Esophagus muscularis mucosa (tissue), 4 donors: ENCODE measurements at regions of chr3 and their contacts with region 1.

Region 1: DNA sequence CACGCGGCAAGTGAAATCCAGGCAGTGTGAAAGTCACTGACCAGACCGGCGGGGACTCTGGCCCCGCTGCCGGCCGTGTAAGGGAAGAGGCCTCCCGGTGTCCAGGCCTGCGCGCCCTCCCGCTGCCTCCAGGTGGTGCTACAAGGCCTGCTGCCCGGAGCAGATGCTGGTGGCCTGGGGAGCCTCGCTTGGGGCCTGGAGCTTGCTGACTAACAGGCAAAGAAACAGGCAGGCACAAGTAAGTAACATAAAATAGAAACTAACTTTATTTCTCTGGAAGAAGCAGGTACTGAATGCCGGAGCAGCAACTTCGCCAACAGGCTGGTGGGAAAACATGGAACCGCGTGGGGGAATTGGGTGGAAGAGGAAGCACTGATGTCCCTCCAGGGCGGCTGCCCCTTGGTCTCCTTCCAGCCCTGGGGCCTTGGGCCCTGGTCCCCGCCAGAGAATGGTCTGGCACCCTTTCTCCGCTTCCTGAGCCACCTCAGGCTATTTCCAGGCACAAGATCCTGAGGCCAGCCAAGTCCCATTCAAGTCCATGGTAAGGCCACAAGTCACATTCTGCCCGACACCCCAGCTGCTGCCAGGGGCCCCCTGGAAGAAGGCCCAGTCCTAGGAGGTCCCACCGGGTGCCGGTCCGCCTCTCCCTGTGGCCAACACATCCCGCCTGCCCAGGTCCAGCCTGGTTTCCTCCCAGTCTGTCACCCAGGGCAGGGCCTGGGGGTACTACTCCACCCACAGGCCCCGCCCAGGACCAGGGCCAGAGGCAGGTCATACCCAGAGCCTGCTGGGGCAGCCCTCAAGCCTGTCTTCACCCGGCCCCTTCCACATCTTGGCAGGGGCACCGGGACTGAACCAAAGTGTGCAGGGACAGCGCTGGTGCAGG is 45.0 kb downstream of the TNK2 start:
- DNase-seq: peak; percentile 95
- H3K4me3 ChIP-seq: no peak overlapping the region
- H3K27ac ChIP-seq: peak overlapping the region; percentile 69 to 84 (median 74)
- H3K4me1 ChIP-seq: peaks cover 10 to 27% (median 25%) of the 10 kb centered on the region in 4 donors
- H3K27me3 ChIP-seq: no peaks in the 10 kb centered on the region
- CTCF ChIP-seq: peak; percentile 94 to 99 (median 98)
- EP300 ChIP-seq: no peak
- POLR2A ChIP-seq: no peak

Region 2: GRCh38 chr3:195894780-195895607 is 31.6 kb after region 1 on chr3:
- intact Hi-C with region 1: loop called (anchors 1 kb)
- DNase-seq: no peak
- H3K4me3 ChIP-seq: peak overlapping the region; percentile 64 to 78 (median 74)
- H3K27ac ChIP-seq: peak overlapping the region; percentile 89 to 95 (median 93)
- H3K4me1 ChIP-seq: peaks cover 66 to 86% (median 83%) of the 10 kb centered on the region in 4 donors
- H3K27me3 ChIP-seq: no peaks in the 10 kb centered on the region
- CTCF ChIP-seq: peak; percentile 88 to 98 (median 93)
- EP300 ChIP-seq: no peak
- POLR2A ChIP-seq: no peak

Region 3: GRCh38 chr3:195914648-195915473 is 51.5 kb after region 1 on chr3:
- intact Hi-C with region 1: loop called (anchors 2 kb)
- DNase-seq: peak; percentile 98
- H3K4me3 ChIP-seq: peak overlapping the region; percentile 15 to 25 (median 18)
- H3K27ac ChIP-seq: peak overlapping the region; percentile 87 to 89 (median 87)
- H3K4me1 ChIP-seq: peaks cover 10 to 26% (median 25%) of the 10 kb centered on the region in 4 donors
- H3K27me3 ChIP-seq: no peaks in the 10 kb centered on the region
- CTCF ChIP-seq: peak; percentile 95 to 96 (median 95)
- EP300 ChIP-seq: no peak
- POLR2A ChIP-seq: no peak